ENCODE measurements at regions of chr7 and their contacts with region 1.

Region 1: DNA sequence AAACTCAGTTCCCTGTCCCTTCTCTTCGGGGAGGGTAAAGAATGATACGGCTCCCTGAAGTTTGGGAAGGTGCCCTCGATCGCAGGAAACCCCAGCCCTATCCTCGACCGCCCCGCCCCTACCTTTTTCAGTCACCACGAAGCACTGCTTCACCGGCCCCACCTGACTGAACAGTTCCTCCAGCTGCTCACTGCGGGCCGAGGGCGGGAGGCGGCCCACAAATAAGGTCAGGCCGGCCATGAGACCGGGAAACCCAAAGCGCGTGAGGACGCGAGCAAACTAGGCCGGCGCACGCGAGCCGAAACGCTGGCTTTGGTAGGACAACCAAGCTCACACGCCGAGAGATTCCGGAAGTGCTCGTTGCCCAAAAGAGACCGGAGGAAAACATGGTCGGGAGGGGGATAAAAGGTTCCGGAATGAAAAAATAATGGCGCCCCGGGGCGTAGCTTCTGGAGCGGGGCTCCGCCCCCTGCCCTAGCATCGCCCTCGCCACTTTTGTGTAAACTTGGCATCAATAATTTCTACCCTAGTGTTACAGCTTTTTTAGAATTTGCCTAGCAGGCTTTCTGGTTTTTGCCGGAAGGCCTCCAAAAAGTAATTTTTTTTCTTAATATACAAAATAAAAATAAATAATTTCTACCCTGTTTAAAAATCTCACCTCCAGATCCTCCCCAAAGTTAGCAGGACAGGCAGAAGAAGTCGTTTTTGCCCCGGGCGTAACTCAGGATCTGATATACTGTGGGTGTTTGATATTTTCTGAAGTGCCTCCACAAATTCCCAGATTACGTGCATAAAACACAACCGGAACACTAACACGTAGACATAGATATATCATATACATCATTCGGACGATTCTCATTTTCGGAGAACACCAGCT is at the start of gene RBM28:
- DNase-seq: peak; percentile 90
- ATAC-seq: peak; percentile 97
- H3K4me3 ChIP-seq: peak within 1 kb of the TSS; percentile 78
- H3K27ac ChIP-seq: peak within 1 kb of the TSS; percentile 91
- H3K4me1 ChIP-seq: peaks cover 2% of the 10 kb centered on the region; the same call in 1 of the 2 replicates
- H3K27me3 ChIP-seq: peaks cover 9% of the 10 kb centered on the region
- CTCF ChIP-seq: no peak
- POLR2A ChIP-seq: peak; percentile 75
- RAD21 ChIP-seq: no peak
- total RNA-seq, gene RBM28: 12.4 and 18.6 TPM in 2 replicates

Region 2: DNA sequence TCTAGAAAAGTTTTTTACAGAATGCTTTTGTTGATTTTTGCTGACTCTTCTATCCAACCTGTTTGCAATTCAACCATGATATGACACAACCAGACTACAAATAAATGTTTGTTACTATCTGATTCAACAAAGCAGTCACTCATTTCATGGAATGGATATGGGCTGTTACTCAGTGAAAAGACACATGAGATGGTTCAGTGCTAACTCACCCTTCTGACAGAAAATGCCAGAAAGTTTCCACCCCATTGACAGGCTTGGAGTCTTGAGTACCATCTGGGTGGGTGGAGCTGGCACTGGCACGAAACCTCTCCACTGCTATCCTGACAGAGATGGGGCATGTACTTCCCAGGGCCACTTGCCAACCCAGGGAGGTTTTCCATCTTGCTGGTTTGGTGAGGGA is 39.6 kb before region 1 on chr7:
- CTCF ChIA-PET with region 1: no interaction called
- POLR2A ChIA-PET with region 1: no interaction called
- dilution Hi-C with region 1: no loop called
- in situ Hi-C with region 1: no loop called
- intact Hi-C with region 1: no loop called
- DNase-seq: no peak
- ATAC-seq: no peak
- H3K4me3 ChIP-seq: no peak overlapping the region
- H3K27ac ChIP-seq: no peak overlapping the region
- H3K4me1 ChIP-seq: no peaks in the 10 kb centered on the region
- H3K27me3 ChIP-seq: no peaks in the 10 kb centered on the region
- CTCF ChIP-seq: no peak
- POLR2A ChIP-seq: no peak
- RAD21 ChIP-seq: no peak

Region 3: GRCh38 chr7:128381161-128381821 is 37.5 kb after region 1 on chr7:
- CTCF ChIA-PET with region 1: interaction called, 66 read pairs
- POLR2A ChIA-PET with region 1: no interaction called
- dilution Hi-C with region 1: no loop called
- in situ Hi-C with region 1: loop called (anchors 5 kb)
- intact Hi-C with region 1: no loop called
- DNase-seq: no peak
- ATAC-seq: no peak
- H3K4me3 ChIP-seq: no peak overlapping the region
- H3K27ac ChIP-seq: no peak overlapping the region
- H3K4me1 ChIP-seq: no peaks in the 10 kb centered on the region
- H3K27me3 ChIP-seq: peaks cover 40% of the 10 kb centered on the region
- CTCF ChIP-seq: peak; percentile 33; the same call in 1 of the 2 replicates
- POLR2A ChIP-seq: no peak
- RAD21 ChIP-seq: no peak

Region 4: DNA sequence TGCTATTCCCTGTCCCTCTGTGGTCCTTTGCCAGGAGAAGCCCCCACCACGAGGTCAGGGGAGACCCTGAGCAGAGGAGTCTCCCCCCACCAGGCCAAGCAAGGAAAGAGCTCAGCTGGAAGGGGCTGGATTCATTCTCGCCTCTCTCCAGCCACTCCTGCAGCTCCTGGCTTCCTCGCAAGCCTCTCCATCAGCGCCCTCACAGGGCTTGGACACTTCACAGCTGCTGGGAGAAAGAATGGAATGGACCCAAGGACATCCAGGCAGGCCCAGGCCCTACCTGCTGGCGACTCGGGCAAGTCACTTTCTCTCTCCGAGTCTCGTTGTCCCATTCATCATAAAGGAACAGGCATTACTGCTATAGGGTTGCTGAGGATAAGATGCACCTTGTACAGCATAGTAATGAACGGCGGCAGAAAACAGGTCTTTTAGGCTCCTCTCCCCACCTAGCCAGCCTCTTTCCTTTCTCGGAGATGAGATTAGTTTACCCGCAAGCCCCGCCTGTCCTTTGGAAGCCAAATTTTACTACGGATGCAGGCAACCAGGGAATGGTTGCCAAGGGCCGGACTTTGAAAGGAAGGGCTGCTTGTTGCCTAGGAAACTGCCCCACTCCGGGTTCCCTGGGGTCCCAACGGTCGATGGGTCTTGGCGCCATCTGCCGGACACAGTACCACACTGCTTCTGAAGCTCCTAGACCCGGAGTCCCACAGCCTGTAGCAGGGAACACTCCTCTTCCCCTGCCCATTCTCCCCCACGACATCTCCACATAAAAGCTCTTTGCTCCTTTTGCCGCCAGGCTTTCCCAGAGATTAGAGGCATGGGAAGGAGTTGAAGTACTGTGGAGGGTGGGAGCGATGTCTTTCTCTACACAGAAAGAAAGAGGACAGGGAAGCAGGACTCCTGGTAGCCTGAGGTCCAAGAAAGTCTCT is 43.7 kb after region 1 on chr7:
- CTCF ChIA-PET with region 1: interaction called, 66 read pairs
- POLR2A ChIA-PET with region 1: interaction called, 4 read pairs
- dilution Hi-C with region 1: no loop called
- in situ Hi-C with region 1: loop called (anchors 5 kb)
- intact Hi-C with region 1: loop called (anchors 1 kb)
- DNase-seq: peak; percentile 57
- ATAC-seq: peak; percentile 95
- H3K4me3 ChIP-seq: no peak overlapping the region
- H3K27ac ChIP-seq: no peak overlapping the region
- H3K4me1 ChIP-seq: no peaks in the 10 kb centered on the region
- H3K27me3 ChIP-seq: peaks cover 34% of the 10 kb centered on the region
- CTCF ChIP-seq: peak; percentile 91
- POLR2A ChIP-seq: no peak
- RAD21 ChIP-seq: peak; percentile 83